HEK293 (cell line): ENCODE measurements at regions of chr6 and their contacts with region 1.

Region 1: DNA sequence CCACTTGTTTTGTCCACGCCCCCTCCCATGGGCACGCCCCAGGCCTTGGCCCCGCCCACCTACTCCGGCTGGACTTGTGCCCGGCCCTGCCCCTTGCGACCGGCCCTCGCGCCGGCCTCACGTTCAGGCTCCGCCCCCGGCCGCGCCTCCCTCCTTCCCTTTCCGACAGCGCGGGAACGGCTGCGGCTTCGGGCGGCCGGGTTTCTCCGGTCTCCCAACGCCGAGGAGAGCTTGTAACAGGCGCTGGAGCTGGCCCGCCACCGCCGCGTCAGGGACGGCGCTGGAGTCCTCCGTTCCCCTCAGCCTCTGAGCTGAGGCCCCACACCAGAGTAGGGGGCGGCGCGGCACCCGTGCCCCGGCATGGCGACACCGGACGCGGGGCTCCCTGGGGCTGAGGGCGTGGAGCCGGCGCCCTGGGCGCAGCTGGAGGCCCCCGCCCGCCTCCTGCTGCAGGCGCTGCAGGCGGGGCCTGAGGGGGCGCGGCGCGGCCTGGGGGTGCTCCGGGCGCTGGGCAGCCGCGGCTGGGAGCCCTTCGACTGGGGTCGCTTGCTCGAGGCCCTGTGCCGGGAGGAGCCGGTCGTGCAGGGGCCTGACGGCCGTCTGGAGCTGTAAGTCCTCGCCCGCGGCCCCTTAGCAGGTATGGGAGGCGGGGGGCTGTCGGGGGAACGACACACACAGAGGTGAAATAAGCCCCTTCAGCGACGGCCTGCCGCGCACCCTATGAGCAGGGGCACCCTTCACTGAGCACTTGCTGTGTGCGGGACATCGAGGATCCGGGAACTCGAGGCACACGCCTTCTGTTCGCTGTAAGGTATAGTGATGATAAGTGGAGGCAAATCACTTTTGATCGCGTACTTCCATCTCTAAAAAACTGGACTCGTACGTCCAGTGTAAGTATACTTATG is at the start of gene FANCE:
- H3K4me3 ChIP-seq: peak within 1 kb of the TSS; percentile 78
- H3K27ac ChIP-seq: peak within 1 kb of the TSS; percentile 83
- H3K4me1 ChIP-seq: peaks cover 23% of the 10 kb centered on the region
- CTCF ChIP-seq: no peak

Region 2: GRCh38 chr6:35342258-35343091 is 110.0 kb before region 1 on chr6 and contains the start of gene PPARD:
- CTCF ChIA-PET with region 1: interaction called, 149 read pairs
- POLR2A ChIA-PET with region 1: interaction called, 16 read pairs
- H3K4me3 ChIP-seq: peak within 1 kb of the TSS; percentile 65
- H3K27ac ChIP-seq: no peak within 1 kb of the TSS; the same call in 1 of the 2 replicates
- H3K4me1 ChIP-seq: no peaks in the 10 kb centered on the region; the same call in 1 of the 2 replicates
- CTCF ChIP-seq: peak; percentile 97

Region 3: GRCh38 chr6:35363293-35363750 is 89.1 kb before region 1 on chr6:
- CTCF ChIA-PET with region 1: interaction called, 13 read pairs
- POLR2A ChIA-PET with region 1: no interaction called
- H3K4me3 ChIP-seq: no peak overlapping the region
- H3K27ac ChIP-seq: peak overlapping the region; percentile 73
- H3K4me1 ChIP-seq: peaks cover 19% of the 10 kb centered on the region
- CTCF ChIP-seq: no peak

Region 4: DNA sequence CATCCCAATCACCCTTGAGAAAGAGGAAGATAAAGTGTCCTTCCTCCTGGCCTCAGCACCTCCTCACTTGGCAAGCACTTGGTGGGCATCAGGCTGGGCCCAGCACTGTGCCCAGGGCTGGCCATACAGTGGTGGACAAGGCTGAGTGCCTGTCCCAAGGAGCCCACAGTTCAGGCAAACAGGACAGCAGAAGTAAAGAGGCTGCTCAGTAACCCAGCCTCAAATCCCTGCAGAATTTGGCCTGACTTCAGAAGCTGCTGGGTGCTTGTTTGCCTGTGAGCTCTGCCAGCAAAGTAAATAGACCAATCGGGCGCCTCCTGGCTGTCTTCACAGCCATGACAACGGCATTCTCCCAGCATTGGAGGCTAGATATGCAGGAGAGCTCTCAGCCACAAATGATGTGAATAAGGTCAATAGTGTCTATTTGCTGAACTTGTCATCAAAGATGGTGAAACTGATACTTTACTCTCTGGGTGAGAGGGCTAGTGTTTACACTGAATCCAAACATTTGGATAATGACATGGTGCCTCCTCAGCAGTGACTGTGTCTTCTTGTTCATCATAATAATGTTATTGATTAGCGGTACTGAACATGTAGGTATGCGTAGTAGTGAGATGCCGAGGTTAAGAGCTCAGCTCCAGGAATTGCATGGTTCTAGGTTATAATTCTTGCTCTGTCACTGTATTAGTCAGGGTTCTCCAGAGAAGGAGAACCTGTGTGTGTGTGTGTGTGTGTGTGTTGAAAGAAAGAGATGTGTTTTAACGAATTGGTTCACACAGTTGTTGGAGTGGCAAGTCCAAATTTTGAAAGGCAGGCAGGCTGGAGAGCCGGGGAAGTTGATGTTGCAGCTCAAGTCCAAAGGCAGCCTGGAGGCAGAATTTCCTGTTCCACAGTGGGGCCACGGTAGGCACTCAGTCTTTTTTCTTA is 37.1 kb before region 1 on chr6:
- CTCF ChIA-PET with region 1: interaction called, 53 read pairs
- POLR2A ChIA-PET with region 1: interaction called, 3 read pairs
- H3K4me3 ChIP-seq: no peak overlapping the region
- H3K27ac ChIP-seq: no peak overlapping the region; the same call in 1 of the 2 replicates
- H3K4me1 ChIP-seq: peaks cover 4% of the 10 kb centered on the region
- CTCF ChIP-seq: peak; percentile 53

Region 5: GRCh38 chr6:35468181-35468979 is 15.9 kb after region 1 on chr6 and contains the start of gene RPL10A:
- CTCF ChIA-PET with region 1: interaction called, 53 read pairs
- POLR2A ChIA-PET with region 1: interaction called, 56 read pairs
- H3K4me3 ChIP-seq: peak within 1 kb of the TSS; percentile 80
- H3K27ac ChIP-seq: peak within 1 kb of the TSS; percentile 100
- H3K4me1 ChIP-seq: 0 out of 2 replicates have a peak, but pooled peaks cover 5% of the 10 kb centered on the region
- CTCF ChIP-seq: peak; percentile 99